B cell (primary cell): ENCODE measurements at regions of chr12 and their contacts with region 1.

Region 1: GRCh38 chr12:111451649-111452129 is 46.0 kb downstream of the SH2B3 start:
- DNase-seq: peak; percentile 80
- ATAC-seq: peak; percentile 64
- H3K4me3 ChIP-seq: no peak overlapping the region
- H3K4me3 Mint-ChIP-seq: no peak overlapping the region
- H3K27ac ChIP-seq: peak overlapping the region in 1 of 2 donors; percentile 37
- H3K27ac Mint-ChIP-seq: peak overlapping the region; percentile 17
- H3K4me1 ChIP-seq: peaks cover 0 to 24% of the 10 kb centered on the region in 2 donors
- H3K4me1 Mint-ChIP-seq: peaks cover 29% of the 10 kb centered on the region
- H3K27me3 ChIP-seq: no peaks in the 10 kb centered on the region
- H3K27me3 Mint-ChIP-seq: no peaks in the 10 kb centered on the region
- CTCF ChIP-seq: peak; percentile 89

Region 2: DNA sequence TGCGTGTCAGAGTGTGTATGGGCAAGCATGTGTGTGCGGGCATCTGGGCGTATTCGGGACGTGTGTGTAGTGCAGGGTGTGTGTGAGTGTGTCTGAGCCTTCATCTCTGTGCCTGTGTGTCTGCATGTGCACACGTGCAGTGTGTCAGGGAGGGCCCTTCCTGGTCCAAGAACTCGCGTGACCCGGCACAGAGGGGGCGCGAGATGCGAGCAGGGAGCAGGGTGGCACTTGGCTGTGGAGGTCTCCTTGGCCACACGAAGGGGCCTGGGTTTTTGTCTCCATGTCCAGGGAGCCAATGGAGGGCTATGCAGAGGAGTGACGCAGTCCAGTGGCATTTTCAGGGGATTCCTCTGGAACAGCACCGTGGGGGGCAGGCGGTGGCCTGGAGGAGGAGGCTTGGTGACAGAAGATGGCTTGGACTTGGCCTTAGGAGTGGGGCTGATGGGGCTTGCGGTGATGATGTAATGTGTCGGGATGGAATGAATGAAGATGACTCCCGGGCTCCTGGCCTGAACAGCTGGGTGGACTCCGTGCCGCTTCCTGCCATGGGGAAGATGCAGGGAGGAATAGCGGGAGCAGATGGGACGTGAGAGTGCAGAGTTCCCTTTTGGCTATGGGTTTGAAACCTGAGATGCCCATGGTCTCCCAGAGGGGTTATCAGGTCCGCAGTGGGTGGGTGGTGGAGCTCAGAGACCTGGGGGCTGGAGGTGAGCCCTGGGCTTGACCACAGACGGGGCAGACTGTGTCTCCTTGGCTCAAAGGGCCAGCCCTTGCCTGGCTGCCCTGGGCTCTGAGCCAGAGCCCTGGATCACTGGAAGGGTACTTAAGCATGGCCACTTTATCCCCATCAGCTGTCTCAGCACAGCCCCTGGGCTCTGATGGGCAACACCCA is 291.1 kb before region 1 on chr12:
- CTCF ChIA-PET with region 1: no interaction called
- POLR2A ChIA-PET with region 1: no interaction called
- intact Hi-C with region 1: no loop called
- DNase-seq: no peak
- ATAC-seq: no peak
- H3K4me3 ChIP-seq: no peak overlapping the region
- H3K4me3 Mint-ChIP-seq: no peak overlapping the region
- H3K27ac ChIP-seq: no peak overlapping the region
- H3K27ac Mint-ChIP-seq: no peak overlapping the region
- H3K4me1 ChIP-seq: no peaks in the 10 kb centered on the region
- H3K4me1 Mint-ChIP-seq: no peaks in the 10 kb centered on the region
- H3K27me3 ChIP-seq: no peaks in the 10 kb centered on the region
- H3K27me3 Mint-ChIP-seq: peaks cover 24% of the 10 kb centered on the region
- CTCF ChIP-seq: no peak

Region 3: DNA sequence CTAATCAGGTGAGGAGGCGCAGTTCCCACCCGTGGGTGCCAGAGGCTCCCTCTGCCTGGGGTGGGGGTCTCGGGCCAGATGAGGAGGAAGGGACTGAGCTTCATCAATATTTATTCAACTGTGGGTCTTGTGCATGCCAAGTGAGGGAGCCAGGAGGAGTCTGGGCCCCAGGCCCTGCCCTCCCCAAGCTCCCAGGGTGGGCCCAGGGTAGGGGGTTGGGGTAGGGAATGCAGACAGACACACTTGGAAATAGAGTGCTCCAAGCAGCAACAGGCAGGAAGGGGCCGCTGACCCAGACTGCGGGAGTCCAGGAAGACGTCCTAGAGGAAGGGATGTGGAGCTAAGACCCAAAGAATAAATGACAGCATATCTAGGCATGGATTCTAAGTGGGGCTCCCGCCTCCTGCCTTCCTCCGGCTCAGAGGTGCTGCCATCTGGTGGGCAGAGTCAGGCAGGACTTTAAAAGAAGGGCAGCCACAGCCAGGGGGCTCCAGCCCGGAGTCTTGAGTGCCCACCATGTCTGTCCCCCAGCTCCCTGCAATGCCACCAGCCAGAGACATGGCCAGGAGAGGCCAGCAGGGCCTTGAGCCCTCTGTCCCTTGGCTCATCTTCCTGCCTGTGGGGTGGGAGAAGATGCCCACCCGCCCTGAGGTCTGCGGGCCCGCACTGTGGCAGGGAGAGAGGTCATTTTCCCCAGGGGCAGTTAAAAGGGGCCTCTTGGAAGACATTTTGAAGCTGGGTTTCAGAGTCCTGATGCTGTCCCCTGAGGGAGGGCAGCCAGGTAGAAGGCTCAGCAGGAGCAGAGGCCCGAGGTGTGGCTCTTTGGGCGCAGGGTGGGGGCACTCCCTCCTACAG is 152.9 kb before region 1 on chr12:
- CTCF ChIA-PET with region 1: no interaction called
- POLR2A ChIA-PET with region 1: no interaction called
- intact Hi-C with region 1: no loop called
- DNase-seq: peak; percentile 66
- ATAC-seq: peak; percentile 49
- H3K4me3 ChIP-seq: no peak overlapping the region
- H3K4me3 Mint-ChIP-seq: no peak overlapping the region
- H3K27ac ChIP-seq: no peak overlapping the region
- H3K27ac Mint-ChIP-seq: no peak overlapping the region
- H3K4me1 ChIP-seq: no peaks in the 10 kb centered on the region
- H3K4me1 Mint-ChIP-seq: no peaks in the 10 kb centered on the region
- H3K27me3 ChIP-seq: peaks cover 0 to 8% (median 0%) of the 10 kb centered on the region in 4 experiments
- H3K27me3 Mint-ChIP-seq: peaks cover 4% of the 10 kb centered on the region
- CTCF ChIP-seq: peak; percentile 86

Region 4: GRCh38 chr12:111368788-111369495 is 82.7 kb before region 1 on chr12 and contains the start of gene PHETA1:
- CTCF ChIA-PET with region 1: interaction called, 11 read pairs
- POLR2A ChIA-PET with region 1: no interaction called
- intact Hi-C with region 1: no loop called
- DNase-seq: peak; percentile 78
- ATAC-seq: peak; percentile 98
- H3K4me3 ChIP-seq: peak within 1 kb of the TSS; percentile 46 to 73 (median 70)
- H3K4me3 Mint-ChIP-seq: peak within 1 kb of the TSS; percentile 90
- H3K27ac ChIP-seq: peak within 1 kb of the TSS; percentile 3 to 54
- H3K27ac Mint-ChIP-seq: peak within 1 kb of the TSS; percentile 72
- H3K4me1 ChIP-seq: peaks cover 20 to 25% of the 10 kb centered on the region in 2 donors
- H3K4me1 Mint-ChIP-seq: peaks cover 35% of the 10 kb centered on the region
- H3K27me3 ChIP-seq: no peaks in the 10 kb centered on the region
- H3K27me3 Mint-ChIP-seq: no peaks in the 10 kb centered on the region
- CTCF ChIP-seq: no peak
- total RNA-seq, gene PHETA1: 9.4 and 12.1 TPM in 2 replicates

Region 5: GRCh38 chr12:111405149-111405860 is 46.4 kb before region 1 on chr12:
- CTCF ChIA-PET with region 1: interaction called, 1,472 read pairs
- POLR2A ChIA-PET with region 1: interaction called, 14 read pairs
- intact Hi-C with region 1: loop called (anchors 1 kb)
- DNase-seq: peak; percentile 100
- ATAC-seq: peak; percentile 71
- H3K4me3 ChIP-seq: peak overlapping the region in 4 of 5 experiments; percentile 57 to 94 (median 60)
- H3K4me3 Mint-ChIP-seq: peak overlapping the region; percentile 85
- H3K27ac ChIP-seq: peak overlapping the region; percentile 73 to 97
- H3K27ac Mint-ChIP-seq: peak overlapping the region; percentile 92
- H3K4me1 ChIP-seq: peaks cover 58 to 67% of the 10 kb centered on the region in 2 donors
- H3K4me1 Mint-ChIP-seq: peaks cover 58% of the 10 kb centered on the region
- H3K27me3 ChIP-seq: no peaks in the 10 kb centered on the region
- H3K27me3 Mint-ChIP-seq: no peaks in the 10 kb centered on the region
- CTCF ChIP-seq: peak; percentile 81

Region 6: GRCh38 chr12:111424793-111425251 is 26.9 kb before region 1 on chr12:
- CTCF ChIA-PET with region 1: interaction called, 29 read pairs
- POLR2A ChIA-PET with region 1: no interaction called
- intact Hi-C with region 1: no loop called
- DNase-seq: no peak
- ATAC-seq: no peak
- H3K4me3 ChIP-seq: no peak overlapping the region
- H3K4me3 Mint-ChIP-seq: no peak overlapping the region
- H3K27ac ChIP-seq: peak overlapping the region in 1 of 2 donors; percentile 84
- H3K27ac Mint-ChIP-seq: peak overlapping the region; percentile 32
- H3K4me1 ChIP-seq: peaks cover 26 to 52% of the 10 kb centered on the region in 2 donors
- H3K4me1 Mint-ChIP-seq: peaks cover 54% of the 10 kb centered on the region
- H3K27me3 ChIP-seq: no peaks in the 10 kb centered on the region
- H3K27me3 Mint-ChIP-seq: no peaks in the 10 kb centered on the region
- CTCF ChIP-seq: no peak

Region 7: GRCh38 chr12:111462210-111462769 is 10.6 kb after region 1 on chr12:
- CTCF ChIA-PET with region 1: interaction called, 34 read pairs
- POLR2A ChIA-PET with region 1: no interaction called
- intact Hi-C with region 1: no loop called
- DNase-seq: peak; percentile 6
- ATAC-seq: no peak
- H3K4me3 ChIP-seq: no peak overlapping the region
- H3K4me3 Mint-ChIP-seq: no peak overlapping the region
- H3K27ac ChIP-seq: peak overlapping the region in 1 of 2 donors; percentile 32
- H3K27ac Mint-ChIP-seq: peak overlapping the region; percentile 32
- H3K4me1 ChIP-seq: peaks cover 5 to 9% of the 10 kb centered on the region in 2 donors
- H3K4me1 Mint-ChIP-seq: peaks cover 9% of the 10 kb centered on the region
- H3K27me3 ChIP-seq: no peaks in the 10 kb centered on the region
- H3K27me3 Mint-ChIP-seq: no peaks in the 10 kb centered on the region
- CTCF ChIP-seq: no peak

Region 8: DNA sequence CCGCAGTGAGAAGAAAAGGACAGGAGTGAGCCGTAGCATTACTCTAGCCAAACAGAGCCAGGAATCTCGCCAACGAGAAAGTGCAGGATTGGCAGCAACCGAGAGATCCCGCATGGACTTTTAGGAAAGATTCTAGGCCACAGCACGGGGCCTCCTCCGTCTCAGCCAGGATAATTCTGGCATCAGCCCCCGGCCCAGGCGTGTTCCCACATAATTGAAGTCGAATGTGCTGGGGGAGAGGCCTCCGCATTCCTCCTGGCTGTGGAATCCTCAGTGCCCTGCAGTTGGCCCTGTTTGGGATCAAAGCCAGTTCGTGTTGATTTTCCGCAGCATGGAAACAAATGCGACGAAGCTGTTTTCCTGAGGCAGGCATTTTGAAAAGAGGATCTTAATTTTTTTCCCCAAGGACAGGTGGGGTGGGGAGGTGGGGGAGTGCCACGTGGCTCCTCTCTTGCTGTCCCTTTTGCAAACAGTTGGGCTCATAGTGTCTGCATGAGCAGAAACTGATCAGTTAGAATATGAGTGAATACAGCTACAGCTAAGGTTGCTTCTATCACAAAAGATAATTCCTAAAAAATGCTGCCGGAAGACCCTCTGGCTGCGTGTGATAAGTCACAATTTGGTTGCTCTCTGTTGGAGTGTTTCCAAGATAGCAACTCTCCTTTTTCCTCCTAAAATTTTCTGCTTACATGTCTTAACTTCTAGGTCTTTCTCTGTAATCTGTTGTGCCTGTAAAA is 184.7 kb after region 1 on chr12:
- CTCF ChIA-PET with region 1: no interaction called
- POLR2A ChIA-PET with region 1: no interaction called
- intact Hi-C with region 1: no loop called
- DNase-seq: no peak
- ATAC-seq: no peak
- H3K4me3 ChIP-seq: no peak overlapping the region
- H3K4me3 Mint-ChIP-seq: no peak overlapping the region
- H3K27ac ChIP-seq: no peak overlapping the region
- H3K27ac Mint-ChIP-seq: no peak overlapping the region
- H3K4me1 ChIP-seq: no peaks in the 10 kb centered on the region
- H3K4me1 Mint-ChIP-seq: peaks cover 2% of the 10 kb centered on the region
- H3K27me3 ChIP-seq: no peaks in the 10 kb centered on the region
- H3K27me3 Mint-ChIP-seq: no peaks in the 10 kb centered on the region
- CTCF ChIP-seq: no peak